ENCODE measurements at regions of chr1 and their contacts with region 1.

Region 1: DNA sequence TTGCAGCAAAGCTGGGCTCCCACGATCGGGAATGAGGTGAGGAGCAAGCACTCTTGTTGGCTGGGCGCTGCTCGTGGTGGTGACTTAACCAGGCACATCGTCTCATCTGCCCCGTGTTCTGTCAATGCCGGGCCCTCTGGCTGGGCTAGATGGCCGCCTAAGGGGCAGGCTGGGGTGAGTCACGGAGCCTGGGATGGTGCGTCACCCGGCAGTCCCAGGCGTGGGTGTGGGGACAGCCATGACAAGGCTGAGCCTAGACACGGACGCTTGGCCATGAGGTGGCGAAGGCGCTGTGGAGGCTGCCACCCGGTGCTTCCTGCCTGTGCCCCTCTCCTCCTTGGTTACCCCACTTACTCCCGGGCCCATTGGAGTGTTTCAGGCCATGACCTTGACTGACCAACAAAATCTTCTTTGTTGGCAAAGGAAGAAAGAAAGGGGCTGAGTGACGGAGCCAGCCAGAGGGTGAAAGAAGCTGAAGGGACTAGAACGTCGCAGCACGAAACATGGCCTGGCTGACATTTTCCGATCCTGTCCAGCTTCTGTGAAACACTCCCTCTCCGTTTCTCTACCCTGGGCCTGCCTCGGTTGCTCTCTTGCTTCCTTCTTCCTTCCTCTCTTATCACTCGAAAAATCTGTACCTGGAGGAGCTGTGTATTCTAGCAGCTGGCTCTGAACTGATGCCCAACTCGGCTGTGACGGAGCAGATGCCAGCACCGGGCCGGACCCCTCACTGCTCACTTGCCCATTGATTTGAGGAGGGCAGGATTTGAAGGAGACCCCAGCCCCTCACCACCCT is 596 bp downstream of the CD247 start:
- DNase-seq: peak; percentile 45 to 90 (median 64)
- ATAC-seq: peak; percentile 82
- H3K4me3 ChIP-seq: peak overlapping the region; percentile 86
- H3K4me3 Mint-ChIP-seq: peak overlapping the region; percentile 88 to 100 (median 99)
- H3K27ac ChIP-seq: peak overlapping the region; percentile 96
- H3K27ac Mint-ChIP-seq: peak overlapping the region; percentile 93 to 100 (median 98)
- H3K4me1 ChIP-seq: peaks cover 17 to 32% of the 10 kb centered on the region in 2 donors
- H3K4me1 Mint-ChIP-seq: peaks cover 18 to 60% (median 40%) of the 10 kb centered on the region in 7 donors
- H3K27me3 ChIP-seq: no peaks in the 10 kb centered on the region
- H3K27me3 Mint-ChIP-seq: peaks cover 0 to 11% (median 0%) of the 10 kb centered on the region in 5 donors

Region 2: DNA sequence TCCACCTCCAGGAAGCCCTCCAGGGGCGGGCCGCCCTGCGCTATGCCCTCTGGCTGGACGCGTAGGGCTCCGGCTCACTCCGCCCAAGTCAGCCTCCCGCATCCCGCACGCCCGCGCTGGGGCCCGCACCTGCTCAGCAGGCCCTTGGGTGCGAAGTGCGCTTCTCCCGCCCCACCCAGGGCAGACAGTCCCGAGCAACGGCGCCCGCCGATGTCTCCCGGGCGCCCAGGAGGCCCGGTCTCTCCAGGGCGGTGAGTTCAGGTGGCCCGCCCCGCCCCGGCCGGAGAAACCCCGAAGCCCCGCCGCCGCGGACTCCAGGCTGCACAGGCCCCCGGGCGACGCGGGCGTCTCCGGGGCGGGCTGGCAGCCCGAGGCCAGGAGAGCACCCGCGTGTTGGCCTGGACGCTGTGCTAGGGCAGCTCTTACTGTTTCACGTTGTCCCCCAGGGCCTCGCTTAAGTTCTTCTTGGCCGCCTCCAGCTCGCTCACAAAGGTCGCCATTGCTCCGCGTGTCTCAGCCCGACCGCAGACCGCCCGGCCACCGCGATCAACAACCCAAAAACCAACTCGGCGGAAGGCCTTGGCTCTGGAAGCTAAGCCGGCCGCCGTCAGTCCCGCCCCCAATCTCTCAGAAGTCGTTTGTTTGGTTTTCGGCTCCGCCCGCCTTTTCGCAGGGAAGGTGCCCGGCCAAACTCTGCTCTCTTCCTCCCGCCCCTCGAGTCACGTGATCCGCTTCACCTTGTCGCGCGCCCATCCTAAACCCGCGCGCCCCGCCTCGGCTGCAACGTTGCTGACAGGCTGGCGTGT is 641.8 kb before region 1 on chr1 and contains the start of gene TADA1:
- CTCF ChIA-PET with region 1: no interaction called
- POLR2A ChIA-PET with region 1: no interaction called
- intact Hi-C with region 1: loop called in 1 of 2 experiments (anchors 5 kb)
- DNase-seq: peak; percentile 87 to 97 (median 96)
- ATAC-seq: peak; percentile 95
- H3K4me3 ChIP-seq: peak within 1 kb of the TSS; percentile 64
- H3K4me3 Mint-ChIP-seq: peak within 1 kb of the TSS; percentile 93 to 100 (median 96)
- H3K27ac ChIP-seq: peak within 1 kb of the TSS; percentile 83
- H3K27ac Mint-ChIP-seq: peak within 1 kb of the TSS; percentile 75 to 99 (median 98)
- H3K4me1 ChIP-seq: peaks cover 10 to 12% of the 10 kb centered on the region in 2 donors
- H3K4me1 Mint-ChIP-seq: peaks cover 43 to 63% (median 55%) of the 10 kb centered on the region in 7 donors
- H3K27me3 ChIP-seq: no peaks in the 10 kb centered on the region
- H3K27me3 Mint-ChIP-seq: peaks cover 0 to 11% (median 0%) of the 10 kb centered on the region in 5 donors
- total RNA-seq, gene TADA1: 9.4 to 16.2 (median 15.6) TPM

Region 3: DNA sequence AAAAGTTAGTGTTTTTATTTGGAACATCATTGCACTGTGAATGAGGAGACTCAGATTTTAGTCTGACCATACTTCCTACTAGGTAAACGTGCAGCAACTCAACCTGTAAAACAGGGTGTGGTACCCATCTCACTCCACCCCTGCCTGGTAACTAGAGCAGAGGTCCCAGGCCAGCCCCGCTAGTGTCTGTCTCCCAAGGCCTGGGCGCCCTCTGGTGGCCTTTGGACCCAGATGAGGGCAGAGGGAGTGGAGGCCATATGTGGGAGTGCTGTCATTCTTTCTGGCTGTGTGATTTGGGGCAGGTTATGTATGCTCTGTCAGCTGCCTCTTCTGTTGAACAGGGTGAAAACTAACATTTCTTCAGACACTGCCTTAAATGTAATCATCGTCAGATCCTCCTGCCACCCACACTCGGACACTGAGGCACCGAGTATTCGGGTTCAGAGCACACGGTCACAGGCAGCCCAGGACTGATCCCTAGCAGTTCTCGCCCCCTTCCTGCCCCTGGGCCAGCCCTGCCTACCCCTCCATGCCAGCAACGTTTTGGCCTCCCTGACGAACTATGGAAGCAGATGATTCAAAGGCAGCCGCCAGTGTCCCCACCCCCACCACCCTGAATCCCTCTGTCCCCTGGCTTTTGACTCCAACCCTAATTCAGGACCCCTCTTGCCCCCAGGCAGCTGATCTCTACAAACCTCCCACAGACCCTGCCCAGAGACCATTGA is 75.4 kb before region 1 on chr1:
- CTCF ChIA-PET with region 1: interaction called, 40 read pairs
- POLR2A ChIA-PET with region 1: interaction called, 281 read pairs
- intact Hi-C with region 1: loop called (anchors 1 kb)
- DNase-seq: peak; percentile 79 to 89 (median 87)
- ATAC-seq: peak; percentile 90
- H3K4me3 ChIP-seq: no peak overlapping the region
- H3K4me3 Mint-ChIP-seq: peak overlapping the region; percentile 17 to 75 (median 52)
- H3K27ac ChIP-seq: peak overlapping the region; percentile 57
- H3K27ac Mint-ChIP-seq: peak overlapping the region; percentile 71 to 96 (median 92)
- H3K4me1 ChIP-seq: peaks cover 59 to 85% of the 10 kb centered on the region in 2 donors
- H3K4me1 Mint-ChIP-seq: peaks cover 51 to 99% (median 88%) of the 10 kb centered on the region in 7 donors
- H3K27me3 ChIP-seq: no peaks in the 10 kb centered on the region
- H3K27me3 Mint-ChIP-seq: no peaks in the 10 kb centered on the region

Region 4: DNA sequence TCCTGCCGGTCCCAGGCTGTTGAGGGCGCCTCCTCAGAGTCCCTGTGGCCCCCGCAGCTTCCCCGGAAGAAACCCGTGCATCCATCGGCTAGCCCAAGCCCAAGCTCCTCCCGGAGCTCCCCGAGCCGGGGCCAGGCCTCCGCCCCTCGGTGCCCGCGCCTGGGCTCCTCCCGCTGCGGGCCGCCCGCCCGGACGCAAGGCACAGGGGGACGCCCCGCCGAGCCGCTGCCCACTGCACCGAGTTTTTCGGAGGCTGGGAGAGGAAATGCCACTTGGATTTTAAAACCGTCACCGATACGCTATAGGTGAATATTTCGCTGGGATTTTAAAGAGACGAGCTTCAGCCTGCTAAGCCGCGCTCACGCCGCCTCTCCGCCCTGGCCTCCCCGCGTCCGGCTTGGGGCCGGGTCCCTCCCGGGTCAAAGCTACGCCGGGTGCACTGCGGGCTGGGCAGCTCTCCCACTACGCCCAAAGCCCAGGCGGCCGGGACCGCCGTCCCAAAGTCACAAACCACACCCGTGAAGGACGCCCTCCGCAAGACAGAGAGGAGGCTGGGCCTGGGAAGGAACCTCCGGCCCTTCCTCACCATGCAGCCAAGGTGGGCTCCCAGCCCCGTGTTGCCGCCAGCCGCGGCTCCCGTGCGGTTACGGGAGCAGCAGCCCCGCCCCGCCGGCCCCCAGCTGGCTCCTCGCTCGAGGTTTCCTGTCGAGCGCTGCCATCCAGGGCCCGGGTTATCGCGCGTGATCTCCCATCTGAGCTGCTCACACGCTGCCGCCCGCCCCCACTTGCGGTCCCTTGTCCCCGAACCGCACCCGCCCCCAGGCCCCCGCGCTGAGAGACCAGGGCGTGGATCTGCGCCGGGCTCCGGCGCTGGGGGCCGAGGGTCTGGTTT is 62.6 kb before region 1 on chr1:
- CTCF ChIA-PET with region 1: interaction called, 15 read pairs
- POLR2A ChIA-PET with region 1: interaction called, 273 read pairs
- intact Hi-C with region 1: loop called (anchors 1 kb)
- DNase-seq: peak; percentile 64 to 87 (median 83)
- ATAC-seq: peak; percentile 74
- H3K4me3 ChIP-seq: peak overlapping the region; percentile 91
- H3K4me3 Mint-ChIP-seq: peak overlapping the region; percentile 80 to 91 (median 87)
- H3K27ac ChIP-seq: peak overlapping the region; percentile 100
- H3K27ac Mint-ChIP-seq: peak overlapping the region; percentile 41 to 98 (median 93)
- H3K4me1 ChIP-seq: peaks cover 34 to 70% of the 10 kb centered on the region in 2 donors
- H3K4me1 Mint-ChIP-seq: peaks cover 37 to 86% (median 72%) of the 10 kb centered on the region in 7 donors
- H3K27me3 ChIP-seq: no peaks in the 10 kb centered on the region
- H3K27me3 Mint-ChIP-seq: no peaks in the 10 kb centered on the region

Region 5: DNA sequence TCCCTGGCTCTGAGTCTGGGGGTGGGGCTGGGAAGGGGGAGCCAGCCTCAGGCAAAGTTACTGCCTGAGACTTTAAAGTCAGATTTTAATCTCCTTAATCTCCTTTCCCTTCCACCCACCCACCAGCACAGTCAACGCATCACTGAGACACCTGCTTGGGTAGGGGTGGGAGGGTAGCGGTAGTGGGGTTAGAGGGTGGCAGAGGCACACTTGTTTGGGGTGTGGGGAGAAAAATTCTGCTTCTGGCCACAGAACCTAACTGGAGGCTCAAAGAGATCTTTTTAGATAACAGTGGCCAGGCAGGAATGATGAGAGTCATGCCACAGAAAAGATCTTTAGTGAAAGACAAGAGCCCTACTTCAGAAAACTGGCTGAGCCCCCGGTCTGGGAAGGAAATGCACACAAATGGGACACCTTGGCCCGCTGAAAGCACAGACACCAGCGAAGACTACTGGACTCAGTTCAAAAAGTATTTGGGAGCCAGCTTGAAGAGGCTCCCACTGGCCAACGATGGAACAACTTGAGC is 43.5 kb before region 1 on chr1:
- CTCF ChIA-PET with region 1: interaction called, 4 read pairs
- POLR2A ChIA-PET with region 1: interaction called, 115 read pairs
- intact Hi-C with region 1: loop called in 1 of 2 experiments (anchors 1 kb)
- DNase-seq: peak in 8 of 9 donors; percentile 41 to 87 (median 58)
- ATAC-seq: peak; percentile 89
- H3K4me3 ChIP-seq: peak overlapping the region; percentile 49
- H3K4me3 Mint-ChIP-seq: peak overlapping the region; percentile 52 to 98 (median 86)
- H3K27ac ChIP-seq: peak overlapping the region; percentile 75
- H3K27ac Mint-ChIP-seq: peak overlapping the region; percentile 47 to 98 (median 95)
- H3K4me1 ChIP-seq: peaks cover 36 to 81% of the 10 kb centered on the region in 2 donors
- H3K4me1 Mint-ChIP-seq: peaks cover 57 to 100% (median 94%) of the 10 kb centered on the region in 7 donors
- H3K27me3 ChIP-seq: no peaks in the 10 kb centered on the region
- H3K27me3 Mint-ChIP-seq: no peaks in the 10 kb centered on the region

Region 6: GRCh38 chr1:167491586-167492461 is 25.9 kb before region 1 on chr1:
- CTCF ChIA-PET with region 1: interaction called, 3 read pairs
- POLR2A ChIA-PET with region 1: interaction called, 181 read pairs
- intact Hi-C with region 1: loop called (anchors 1 kb)
- DNase-seq: peak in 6 of 9 donors; percentile 46 to 69 (median 54)
- ATAC-seq: peak; percentile 42
- H3K4me3 ChIP-seq: peak overlapping the region; percentile 35
- H3K4me3 Mint-ChIP-seq: peak overlapping the region; percentile 75 to 88 (median 82)
- H3K27ac ChIP-seq: peak overlapping the region; percentile 96
- H3K27ac Mint-ChIP-seq: peak overlapping the region; percentile 84 to 100 (median 95)
- H3K4me1 ChIP-seq: peaks cover 49 to 94% of the 10 kb centered on the region in 2 donors
- H3K4me1 Mint-ChIP-seq: peaks cover 71 to 100% (median 95%) of the 10 kb centered on the region in 7 donors
- H3K27me3 ChIP-seq: no peaks in the 10 kb centered on the region
- H3K27me3 Mint-ChIP-seq: no peaks in the 10 kb centered on the region

Region 7: GRCh38 chr1:167533851-167534300 is 16.1 kb after region 1 on chr1:
- CTCF ChIA-PET with region 1: interaction called, 28 read pairs
- POLR2A ChIA-PET with region 1: interaction called, 57 read pairs
- intact Hi-C with region 1: loop called in 1 of 2 experiments (anchors 1 kb)
- DNase-seq: peak in 8 of 9 donors; percentile 50 to 72 (median 58)
- ATAC-seq: peak; percentile 87
- H3K4me3 ChIP-seq: no peak overlapping the region
- H3K4me3 Mint-ChIP-seq: no peak overlapping the region
- H3K27ac ChIP-seq: no peak overlapping the region
- H3K27ac Mint-ChIP-seq: peak overlapping the region in 1 of 9 donors; percentile 30
- H3K4me1 ChIP-seq: no peaks in the 10 kb centered on the region
- H3K4me1 Mint-ChIP-seq: peaks cover 0 to 11% (median 2%) of the 10 kb centered on the region in 7 donors
- H3K27me3 ChIP-seq: no peaks in the 10 kb centered on the region
- H3K27me3 Mint-ChIP-seq: peaks cover 0 to 3% (median 0%) of the 10 kb centered on the region in 5 donors

Region 8: DNA sequence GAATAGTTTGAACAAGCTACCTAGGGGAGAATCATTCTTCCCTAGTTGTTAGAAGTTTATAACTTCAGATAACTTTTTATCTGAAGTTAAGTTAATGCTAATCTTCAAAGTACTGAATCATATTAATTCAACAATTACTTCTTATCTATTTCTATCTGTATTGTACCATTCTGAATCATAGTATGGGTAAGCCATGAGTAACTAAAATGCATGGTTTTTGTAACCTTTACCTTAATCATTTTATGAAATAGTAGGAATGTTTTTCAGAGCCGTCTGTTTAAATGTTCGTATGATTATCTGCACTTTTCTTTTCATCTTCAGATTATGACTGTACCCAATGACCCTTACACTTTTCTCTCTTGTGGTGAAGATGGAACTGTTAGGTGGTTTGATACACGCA is 469.4 kb after region 1 on chr1:
- CTCF ChIA-PET with region 1: no interaction called
- POLR2A ChIA-PET with region 1: no interaction called
- intact Hi-C with region 1: no loop called
- DNase-seq: no peak
- ATAC-seq: no peak
- H3K4me3 ChIP-seq: no peak overlapping the region
- H3K4me3 Mint-ChIP-seq: no peak overlapping the region
- H3K27ac ChIP-seq: no peak overlapping the region
- H3K27ac Mint-ChIP-seq: no peak overlapping the region
- H3K4me1 ChIP-seq: no peaks in the 10 kb centered on the region
- H3K4me1 Mint-ChIP-seq: peaks cover 2 to 10% (median 5%) of the 10 kb centered on the region in 7 donors
- H3K27me3 ChIP-seq: no peaks in the 10 kb centered on the region
- H3K27me3 Mint-ChIP-seq: no peaks in the 10 kb centered on the region

Measured in naive thymus-derived CD4-positive, alpha-beta T cell (primary cell).